ENCODE measurements at regions of chr18 and their contacts with region 1.

Region 1: DNA sequence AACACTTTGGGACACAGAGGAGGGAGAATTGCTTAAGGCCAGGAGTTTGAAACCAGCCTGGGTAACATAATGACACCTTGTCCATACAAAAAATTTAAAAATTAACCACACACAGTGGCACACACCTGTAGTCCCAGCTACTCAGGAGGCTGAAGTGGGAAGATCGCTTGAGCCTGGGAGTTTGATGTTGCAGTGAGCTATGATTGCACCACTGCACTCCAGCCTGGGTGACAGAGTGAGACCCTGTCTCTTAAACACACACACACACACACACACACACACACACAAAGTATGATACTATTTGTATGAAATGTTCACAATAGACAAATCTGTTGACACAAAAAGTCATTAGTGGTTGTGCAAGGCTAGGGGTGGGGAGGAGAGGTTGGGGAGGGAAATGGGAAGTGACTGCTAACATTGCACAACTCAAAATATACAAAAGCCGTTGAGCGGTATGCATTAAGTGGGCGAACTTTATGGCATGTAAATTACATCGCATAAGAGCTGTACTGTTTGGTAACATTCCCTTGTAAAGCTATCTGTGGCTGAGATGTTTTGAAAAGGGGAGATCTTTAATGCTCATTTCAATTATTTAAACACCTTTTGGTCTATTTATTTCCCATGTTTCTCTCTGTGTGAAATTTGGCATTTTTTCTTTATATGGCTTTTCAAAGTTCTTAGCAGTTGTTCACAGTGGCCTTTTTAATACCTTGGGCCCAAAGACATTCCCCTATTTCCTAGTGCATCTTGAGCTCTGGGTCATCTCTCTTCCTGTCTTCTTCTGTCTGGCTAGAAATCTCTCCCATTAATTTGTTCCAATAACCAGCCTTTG is 58.9 kb upstream of the ZNF516 start:
- DNase-seq: no peak
- H3K4me3 ChIP-seq: no peak overlapping the region
- H3K27ac ChIP-seq: no peak overlapping the region
- H3K4me1 ChIP-seq: no peaks in the 10 kb centered on the region
- H3K27me3 ChIP-seq: no peaks in the 10 kb centered on the region
- CTCF ChIP-seq: no peak
- EP300 ChIP-seq: no peak
- POLR2A ChIP-seq: no peak

Region 2: GRCh38 chr18:76056471-76057110 is 497.3 kb before region 1 on chr18:
- intact Hi-C with region 1: no loop called
- DNase-seq: peak; percentile 92
- H3K4me3 ChIP-seq: peak overlapping the region in 1 of 4 donors; percentile 5
- H3K27ac ChIP-seq: no peak overlapping the region
- H3K4me1 ChIP-seq: peaks cover 0 to 3% (median 0%) of the 10 kb centered on the region in 4 donors
- H3K27me3 ChIP-seq: no peaks in the 10 kb centered on the region
- CTCF ChIP-seq: no peak
- EP300 ChIP-seq: no peak
- POLR2A ChIP-seq: no peak

Region 3: GRCh38 chr18:76426737-76427305 is 127.1 kb before region 1 on chr18:
- intact Hi-C with region 1: no loop called
- DNase-seq: no peak
- H3K4me3 ChIP-seq: no peak overlapping the region
- H3K27ac ChIP-seq: no peak overlapping the region
- H3K4me1 ChIP-seq: peaks cover 14 to 59% (median 52%) of the 10 kb centered on the region in 4 donors
- H3K27me3 ChIP-seq: no peaks in the 10 kb centered on the region
- CTCF ChIP-seq: peak; percentile 30 to 65 (median 43)
- EP300 ChIP-seq: no peak
- POLR2A ChIP-seq: no peak

Region 4: GRCh38 chr18:76514573-76514972 is 39.4 kb before region 1 on chr18:
- intact Hi-C with region 1: loop called (anchors 5 kb)
- DNase-seq: no peak
- H3K4me3 ChIP-seq: no peak overlapping the region
- H3K27ac ChIP-seq: no peak overlapping the region
- H3K4me1 ChIP-seq: peaks cover 0 to 9% (median 5%) of the 10 kb centered on the region in 4 donors
- H3K27me3 ChIP-seq: no peaks in the 10 kb centered on the region
- CTCF ChIP-seq: no peak
- EP300 ChIP-seq: no peak
- POLR2A ChIP-seq: no peak

Region 5: GRCh38 chr18:76922107-76922506 is 368.2 kb after region 1 on chr18:
- intact Hi-C with region 1: no loop called
- DNase-seq: no peak
- H3K4me3 ChIP-seq: no peak overlapping the region
- H3K27ac ChIP-seq: no peak overlapping the region
- H3K4me1 ChIP-seq: peaks cover 0 to 4% (median 0%) of the 10 kb centered on the region in 4 donors
- H3K27me3 ChIP-seq: no peaks in the 10 kb centered on the region
- CTCF ChIP-seq: peak; percentile 24 to 46 (median 39)
- EP300 ChIP-seq: no peak
- POLR2A ChIP-seq: no peak